Panc1 (cell line): ENCODE measurements at regions of chr7 and their contacts with region 1.

Region 1: DNA sequence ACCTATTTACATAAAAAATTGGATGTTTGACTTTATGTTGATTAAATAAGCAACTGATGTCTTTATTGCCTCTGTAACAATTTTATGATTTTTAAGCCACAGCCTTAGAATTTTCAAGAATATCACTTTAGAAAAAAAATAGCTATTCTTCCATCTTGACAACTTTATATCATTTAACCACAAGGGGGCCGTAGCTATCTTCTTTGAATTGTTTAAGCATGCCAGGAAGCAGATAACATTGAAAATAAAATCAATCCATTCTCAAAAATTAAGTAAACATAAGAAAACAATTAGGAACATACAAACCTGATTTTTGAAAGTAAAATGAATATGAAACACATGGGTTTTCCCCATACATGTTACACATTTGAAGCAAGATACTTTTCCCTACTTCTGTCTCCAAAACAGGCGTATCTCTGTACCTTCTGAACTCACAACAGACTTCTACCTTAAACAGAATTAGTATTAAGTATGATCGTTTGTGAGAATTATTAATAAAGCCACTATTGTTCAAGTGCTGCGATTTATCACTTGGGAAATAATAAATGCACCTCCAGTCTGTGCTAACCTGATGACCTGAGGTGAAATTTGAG is 209.0 kb downstream of the CACNA2D1 start:
- DNase-seq: peak; percentile 20
- ATAC-seq: no peak
- H3K4me3 ChIP-seq: no peak overlapping the region
- H3K27ac ChIP-seq: no peak overlapping the region
- H3K4me1 ChIP-seq: no peaks in the 10 kb centered on the region
- H3K27me3 ChIP-seq: no peaks in the 10 kb centered on the region
- CTCF ChIP-seq: peak; percentile 66; the same call in 1 of the 2 replicates

Region 2: GRCh38 chr7:82019551-82020475 is 214.7 kb before region 1 on chr7:
- CTCF ChIA-PET with region 1: no interaction called
- POLR2A ChIA-PET with region 1: no interaction called
- in situ Hi-C with region 1: no loop called
- intact Hi-C with region 1: no loop called
- DNase-seq: no peak
- ATAC-seq: no peak
- H3K4me3 ChIP-seq: no peak overlapping the region
- H3K27ac ChIP-seq: no peak overlapping the region
- H3K4me1 ChIP-seq: no peaks in the 10 kb centered on the region
- H3K27me3 ChIP-seq: no peaks in the 10 kb centered on the region
- CTCF ChIP-seq: no peak

Region 3: DNA sequence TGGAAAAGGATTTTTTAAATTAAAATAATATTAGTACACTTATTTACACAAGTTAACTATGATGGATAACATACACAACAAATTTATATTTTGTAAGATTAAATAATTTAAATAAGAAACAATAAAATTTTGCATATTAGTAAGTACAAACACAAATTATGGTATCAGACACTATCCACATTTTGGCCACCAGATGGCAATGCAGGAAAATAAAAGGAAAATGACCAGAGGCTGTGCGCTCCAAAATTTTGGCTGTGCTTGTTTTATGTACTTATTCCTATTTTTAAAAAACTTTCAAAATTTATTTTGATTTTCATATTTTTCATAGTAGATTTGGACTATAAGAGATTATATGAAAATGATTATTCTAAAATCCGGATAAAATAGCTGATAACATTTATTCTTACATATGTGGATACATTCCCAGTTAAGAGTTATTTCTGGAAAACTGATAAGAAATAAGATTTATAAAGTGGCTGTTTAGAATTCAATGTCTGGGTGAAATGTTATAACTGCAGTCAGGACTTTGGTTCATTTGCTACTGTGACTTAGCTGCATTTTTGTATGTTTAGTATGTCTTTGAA is 190.0 kb before region 1 on chr7:
- CTCF ChIA-PET with region 1: no interaction called
- POLR2A ChIA-PET with region 1: no interaction called
- in situ Hi-C with region 1: no loop called
- intact Hi-C with region 1: loop called (anchors 10 kb)
- DNase-seq: peak; percentile 54
- ATAC-seq: 0 out of 2 replicates have a peak, but pooled peaks have one; percentile 58
- H3K4me3 ChIP-seq: no peak overlapping the region
- H3K27ac ChIP-seq: no peak overlapping the region
- H3K4me1 ChIP-seq: peaks cover 3% of the 10 kb centered on the region; the same call in 1 of the 2 replicates
- H3K27me3 ChIP-seq: no peaks in the 10 kb centered on the region
- CTCF ChIP-seq: peak; percentile 64; the same call in 1 of the 2 replicates

Region 4: DNA sequence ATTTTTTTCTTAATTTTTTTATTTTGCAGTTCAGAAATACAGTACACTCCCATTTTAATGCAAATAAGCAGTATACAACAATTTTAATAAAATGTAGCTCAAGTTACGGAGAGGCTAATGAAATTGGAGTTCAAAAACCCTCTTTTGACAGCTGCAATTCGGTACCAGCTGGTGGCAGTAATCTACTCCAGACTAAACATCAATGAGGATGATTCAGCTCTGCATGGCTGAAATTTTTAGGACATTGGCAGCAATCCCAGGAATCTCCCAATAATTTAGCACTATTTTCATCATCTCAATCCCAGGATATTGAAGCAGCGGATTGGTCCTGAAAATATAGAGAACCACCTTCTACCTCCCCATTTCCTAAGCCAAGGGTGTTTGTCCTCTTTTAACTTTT is 69.7 kb before region 1 on chr7:
- CTCF ChIA-PET with region 1: no interaction called
- POLR2A ChIA-PET with region 1: no interaction called
- in situ Hi-C with region 1: no loop called
- intact Hi-C with region 1: loop called (anchors 2 kb)
- DNase-seq: no peak
- ATAC-seq: no peak
- H3K4me3 ChIP-seq: no peak overlapping the region
- H3K27ac ChIP-seq: no peak overlapping the region
- H3K4me1 ChIP-seq: no peaks in the 10 kb centered on the region
- H3K27me3 ChIP-seq: no peaks in the 10 kb centered on the region
- CTCF ChIP-seq: peak; percentile 34; the same call in 1 of the 2 replicates

Region 5: DNA sequence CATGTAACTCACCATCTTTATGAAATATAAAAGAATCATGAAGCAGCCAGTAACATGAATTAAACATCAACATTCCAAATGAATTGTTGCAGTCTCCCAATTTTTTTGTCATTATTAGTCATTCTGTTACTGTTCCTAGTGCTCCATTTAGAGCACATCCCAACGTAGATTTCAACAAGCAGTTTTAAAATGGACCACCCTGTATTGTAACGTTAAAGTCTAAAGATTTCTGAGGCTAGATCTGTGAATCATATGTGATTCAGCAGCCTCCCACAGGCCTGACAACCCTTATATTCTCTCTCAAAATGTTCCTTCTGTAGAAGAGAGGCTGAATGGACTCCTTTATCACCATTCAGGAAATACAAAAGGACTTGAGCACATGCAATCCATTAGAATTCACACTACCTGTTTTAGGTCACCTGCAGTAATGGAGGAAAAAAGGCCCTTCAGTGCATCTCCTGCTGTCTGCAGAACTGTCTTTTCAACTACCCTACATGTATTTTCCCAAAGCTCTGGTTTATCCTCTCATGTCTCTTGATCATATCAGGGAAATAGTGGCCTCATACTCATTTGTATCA is 127.7 kb after region 1 on chr7:
- CTCF ChIA-PET with region 1: no interaction called
- POLR2A ChIA-PET with region 1: no interaction called
- in situ Hi-C with region 1: no loop called
- intact Hi-C with region 1: no loop called
- DNase-seq: no peak
- ATAC-seq: no peak
- H3K4me3 ChIP-seq: no peak overlapping the region
- H3K27ac ChIP-seq: no peak overlapping the region
- H3K4me1 ChIP-seq: no peaks in the 10 kb centered on the region
- H3K27me3 ChIP-seq: no peaks in the 10 kb centered on the region
- CTCF ChIP-seq: no peak

Region 6: DNA sequence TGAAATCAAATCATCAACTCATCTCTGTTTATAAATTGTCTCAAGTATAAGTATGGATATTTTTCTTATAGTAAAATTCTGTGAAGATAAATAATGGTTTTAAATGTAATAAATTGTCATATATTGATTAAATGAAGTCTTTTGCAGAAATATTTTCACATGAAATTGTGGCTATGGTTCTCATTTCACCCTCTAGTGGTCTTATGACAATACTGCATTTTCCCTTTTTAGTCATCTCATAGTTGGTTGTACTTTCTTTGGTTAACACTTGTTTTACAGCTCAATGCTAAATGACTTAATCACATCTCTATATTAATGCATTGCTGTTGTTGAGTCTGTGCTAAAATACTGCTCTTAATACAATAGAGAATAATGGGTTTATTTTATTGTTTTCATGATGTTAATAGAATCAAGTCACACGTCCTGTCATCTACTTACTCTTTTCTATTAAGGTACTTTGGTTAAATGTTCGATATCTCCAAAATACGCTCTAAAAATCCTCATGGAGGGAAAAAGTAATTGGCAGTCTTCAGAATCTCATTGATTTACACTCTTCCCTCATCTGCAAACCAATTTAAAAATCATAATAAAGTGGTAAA is 247.0 kb after region 1 on chr7:
- CTCF ChIA-PET with region 1: no interaction called
- POLR2A ChIA-PET with region 1: no interaction called
- in situ Hi-C with region 1: no loop called
- intact Hi-C with region 1: loop called (anchors 5 kb)
- DNase-seq: peak; percentile 28
- ATAC-seq: no peak; the same call in 1 of the 2 replicates
- H3K4me3 ChIP-seq: no peak overlapping the region
- H3K27ac ChIP-seq: no peak overlapping the region
- H3K4me1 ChIP-seq: no peaks in the 10 kb centered on the region
- H3K27me3 ChIP-seq: peaks cover 2% of the 10 kb centered on the region; the same call in 1 of the 2 replicates
- CTCF ChIP-seq: peak; percentile 70; the same call in 1 of the 2 replicates

Region 7: GRCh38 chr7:82572195-82572880 is 337.8 kb after region 1 on chr7:
- CTCF ChIA-PET with region 1: no interaction called
- POLR2A ChIA-PET with region 1: no interaction called
- in situ Hi-C with region 1: no loop called
- intact Hi-C with region 1: loop called (anchors 1 kb)
- DNase-seq: peak; percentile 80
- ATAC-seq: peak; percentile 96
- H3K4me3 ChIP-seq: peak overlapping the region in 1 of 2 experiments; percentile 25; a peak in 2 of 4 replicates
- H3K27ac ChIP-seq: no peak overlapping the region
- H3K4me1 ChIP-seq: no peaks in the 10 kb centered on the region
- H3K27me3 ChIP-seq: no peaks in the 10 kb centered on the region
- CTCF ChIP-seq: peak; percentile 93

Region 8: GRCh38 chr7:82605247-82605872 is 370.8 kb after region 1 on chr7:
- CTCF ChIA-PET with region 1: interaction called, 3 read pairs
- POLR2A ChIA-PET with region 1: no interaction called
- in situ Hi-C with region 1: no loop called
- intact Hi-C with region 1: loop called (anchors 10 kb)
- DNase-seq: no peak
- ATAC-seq: no peak
- H3K4me3 ChIP-seq: no peak overlapping the region
- H3K27ac ChIP-seq: no peak overlapping the region
- H3K4me1 ChIP-seq: no peaks in the 10 kb centered on the region
- H3K27me3 ChIP-seq: no peaks in the 10 kb centered on the region
- CTCF ChIP-seq: peak; percentile 79

Region 9: DNA sequence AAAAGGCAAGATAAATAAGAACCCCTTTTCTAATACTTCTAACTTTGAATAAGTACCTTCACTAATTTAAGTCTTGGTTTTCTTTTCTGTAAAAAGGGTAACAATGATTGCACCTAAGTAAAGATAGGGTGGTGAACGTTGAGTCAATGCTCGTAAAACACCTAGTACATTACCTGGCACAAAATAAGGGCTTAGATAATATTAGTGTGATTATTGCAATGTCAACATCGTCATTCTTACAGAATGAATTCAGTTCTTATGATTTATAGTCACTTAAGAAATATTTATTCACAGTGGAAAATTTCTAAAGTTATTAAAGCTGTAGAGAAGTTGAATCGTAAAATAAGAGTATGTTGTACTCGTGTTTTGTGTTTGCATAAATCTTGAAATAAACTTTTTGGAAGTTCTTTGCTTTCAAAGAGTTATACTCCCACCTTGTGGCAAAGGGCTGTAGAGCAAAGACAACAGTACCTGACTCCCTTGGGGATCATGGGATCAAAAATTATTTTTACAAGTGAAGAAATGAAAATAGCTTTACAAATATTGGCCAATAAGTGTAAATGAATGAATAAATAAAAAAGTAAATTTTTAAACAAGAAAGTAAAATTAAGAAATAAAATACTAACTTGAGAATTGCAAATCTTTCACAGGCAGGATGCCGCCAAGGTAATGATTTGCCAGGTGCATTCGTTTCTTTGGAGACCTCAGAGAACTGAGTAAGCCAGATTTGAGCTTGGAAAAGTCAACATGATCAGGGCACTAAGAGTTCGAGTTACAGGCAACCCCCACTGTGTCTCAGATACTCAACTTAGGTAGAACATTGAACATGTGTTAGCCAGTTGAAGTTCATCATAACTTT is 494.8 kb after region 1 on chr7:
- CTCF ChIA-PET with region 1: no interaction called
- POLR2A ChIA-PET with region 1: no interaction called
- in situ Hi-C with region 1: no loop called
- intact Hi-C with region 1: loop called (anchors 5 kb)
- DNase-seq: peak; percentile 33
- ATAC-seq: no peak
- H3K4me3 ChIP-seq: no peak overlapping the region
- H3K27ac ChIP-seq: no peak overlapping the region
- H3K4me1 ChIP-seq: no peaks in the 10 kb centered on the region
- H3K27me3 ChIP-seq: no peaks in the 10 kb centered on the region
- CTCF ChIP-seq: peak; percentile 75; the same call in 1 of the 2 replicates